Activated naive CD4-positive, alpha-beta T cell treated with anti-CD3 and anti-CD28 coated beads for 36 hours (primary cell): ENCODE measurements at regions of chr12 and their contacts with region 1.

Region 1: DNA sequence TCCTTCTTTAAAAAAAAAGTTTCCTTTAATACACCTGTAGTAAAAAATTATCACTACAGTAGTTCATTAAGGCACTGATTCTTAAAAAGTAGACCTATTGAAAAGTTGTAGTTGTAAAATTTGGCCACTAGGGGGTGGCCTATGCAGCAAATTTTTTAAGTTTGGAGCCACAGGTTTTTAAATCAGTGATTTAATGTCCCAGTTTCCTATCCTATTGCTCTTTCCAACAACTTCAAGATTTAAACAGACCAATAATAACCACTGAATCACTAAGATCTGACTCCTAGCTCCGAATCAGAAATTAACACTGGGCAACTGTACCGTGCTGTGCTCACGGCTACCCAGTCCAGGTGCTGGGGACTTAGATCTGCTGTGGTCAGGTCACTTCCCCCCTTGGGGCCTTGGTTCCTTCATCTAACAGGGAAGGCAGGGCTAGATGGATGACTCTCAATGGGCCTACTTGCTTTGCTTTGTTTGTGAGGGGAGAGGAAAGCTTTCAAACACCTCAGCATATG is 279.3 kb downstream of the MED13L start:
- DNase-seq: peak; percentile 32
- H3K4me3 Mint-ChIP-seq: no peak overlapping the region
- H3K27ac Mint-ChIP-seq: no peak overlapping the region
- H3K4me1 Mint-ChIP-seq: peaks cover 19% of the 10 kb centered on the region
- H3K27me3 Mint-ChIP-seq: no peaks in the 10 kb centered on the region

Region 2: DNA sequence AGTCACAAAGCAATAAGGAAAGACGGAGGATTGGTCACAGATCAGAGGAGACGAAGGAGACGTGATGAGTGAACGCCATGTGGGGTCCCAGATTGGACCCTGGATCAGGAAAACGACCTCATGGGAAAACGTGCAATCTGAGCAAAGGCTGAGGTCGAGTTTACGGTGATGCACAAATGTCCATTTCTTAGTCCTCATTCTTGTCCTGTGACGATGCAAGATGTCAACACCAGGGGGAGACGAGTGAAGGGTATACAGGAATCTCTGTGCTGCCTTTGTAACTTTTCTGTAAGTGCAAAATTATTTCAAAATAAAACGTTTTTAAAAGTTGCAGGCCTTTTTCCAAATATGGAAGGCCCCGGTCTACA is 50.5 kb before region 1 on chr12:
- CTCF ChIA-PET with region 1: no interaction called
- intact Hi-C with region 1: no loop called
- DNase-seq: no peak
- H3K4me3 Mint-ChIP-seq: no peak overlapping the region
- H3K27ac Mint-ChIP-seq: no peak overlapping the region
- H3K4me1 Mint-ChIP-seq: no peaks in the 10 kb centered on the region
- H3K27me3 Mint-ChIP-seq: no peaks in the 10 kb centered on the region

Region 3: GRCh38 chr12:116066381-116067230 is 68.4 kb after region 1 on chr12:
- CTCF ChIA-PET with region 1: interaction called, 3 read pairs
- intact Hi-C with region 1: loop called (anchors 2 kb)
- DNase-seq: peak; percentile 74
- H3K4me3 Mint-ChIP-seq: no peak overlapping the region
- H3K27ac Mint-ChIP-seq: no peak overlapping the region
- H3K4me1 Mint-ChIP-seq: peaks cover 34% of the 10 kb centered on the region
- H3K27me3 Mint-ChIP-seq: no peaks in the 10 kb centered on the region

Region 4: GRCh38 chr12:116194935-116195431 is 196.8 kb after region 1 on chr12:
- CTCF ChIA-PET with region 1: interaction called, 4 read pairs
- intact Hi-C with region 1: loop called (anchors 2 kb)
- DNase-seq: peak; percentile 87
- H3K4me3 Mint-ChIP-seq: no peak overlapping the region
- H3K27ac Mint-ChIP-seq: no peak overlapping the region
- H3K4me1 Mint-ChIP-seq: peaks cover 53% of the 10 kb centered on the region
- H3K27me3 Mint-ChIP-seq: no peaks in the 10 kb centered on the region

Region 5: GRCh38 chr12:116236148-116236731 is 238.1 kb after region 1 on chr12:
- CTCF ChIA-PET with region 1: interaction called, 6 read pairs
- intact Hi-C with region 1: loop called (anchors 1 kb)
- DNase-seq: peak; percentile 77
- H3K4me3 Mint-ChIP-seq: peak overlapping the region; percentile 4
- H3K27ac Mint-ChIP-seq: peak overlapping the region; percentile 71
- H3K4me1 Mint-ChIP-seq: peaks cover 37% of the 10 kb centered on the region
- H3K27me3 Mint-ChIP-seq: no peaks in the 10 kb centered on the region

Region 6: GRCh38 chr12:116247377-116247776 is 249.2 kb after region 1 on chr12:
- CTCF ChIA-PET with region 1: no interaction called
- intact Hi-C with region 1: no loop called
- DNase-seq: no peak
- H3K4me3 Mint-ChIP-seq: no peak overlapping the region
- H3K27ac Mint-ChIP-seq: no peak overlapping the region
- H3K4me1 Mint-ChIP-seq: peaks cover 59% of the 10 kb centered on the region
- H3K27me3 Mint-ChIP-seq: no peaks in the 10 kb centered on the region

Region 7: GRCh38 chr12:116599285-116600136 is 601.3 kb after region 1 on chr12:
- CTCF ChIA-PET with region 1: interaction called, 4 read pairs
- intact Hi-C with region 1: loop called (anchors 1 kb)
- DNase-seq: peak; percentile 73
- H3K4me3 Mint-ChIP-seq: no peak overlapping the region
- H3K27ac Mint-ChIP-seq: no peak overlapping the region
- H3K4me1 Mint-ChIP-seq: peaks cover 13% of the 10 kb centered on the region
- H3K27me3 Mint-ChIP-seq: no peaks in the 10 kb centered on the region

Region 8: GRCh38 chr12:116708826-116709756 is 710.9 kb after region 1 on chr12:
- CTCF ChIA-PET with region 1: no interaction called
- intact Hi-C with region 1: loop called (anchors 5 kb)
- DNase-seq: peak; percentile 71
- H3K4me3 Mint-ChIP-seq: peak overlapping the region; percentile 63
- H3K27ac Mint-ChIP-seq: no peak overlapping the region
- H3K4me1 Mint-ChIP-seq: peaks cover 8% of the 10 kb centered on the region
- H3K27me3 Mint-ChIP-seq: peaks cover 6% of the 10 kb centered on the region

Region 9: DNA sequence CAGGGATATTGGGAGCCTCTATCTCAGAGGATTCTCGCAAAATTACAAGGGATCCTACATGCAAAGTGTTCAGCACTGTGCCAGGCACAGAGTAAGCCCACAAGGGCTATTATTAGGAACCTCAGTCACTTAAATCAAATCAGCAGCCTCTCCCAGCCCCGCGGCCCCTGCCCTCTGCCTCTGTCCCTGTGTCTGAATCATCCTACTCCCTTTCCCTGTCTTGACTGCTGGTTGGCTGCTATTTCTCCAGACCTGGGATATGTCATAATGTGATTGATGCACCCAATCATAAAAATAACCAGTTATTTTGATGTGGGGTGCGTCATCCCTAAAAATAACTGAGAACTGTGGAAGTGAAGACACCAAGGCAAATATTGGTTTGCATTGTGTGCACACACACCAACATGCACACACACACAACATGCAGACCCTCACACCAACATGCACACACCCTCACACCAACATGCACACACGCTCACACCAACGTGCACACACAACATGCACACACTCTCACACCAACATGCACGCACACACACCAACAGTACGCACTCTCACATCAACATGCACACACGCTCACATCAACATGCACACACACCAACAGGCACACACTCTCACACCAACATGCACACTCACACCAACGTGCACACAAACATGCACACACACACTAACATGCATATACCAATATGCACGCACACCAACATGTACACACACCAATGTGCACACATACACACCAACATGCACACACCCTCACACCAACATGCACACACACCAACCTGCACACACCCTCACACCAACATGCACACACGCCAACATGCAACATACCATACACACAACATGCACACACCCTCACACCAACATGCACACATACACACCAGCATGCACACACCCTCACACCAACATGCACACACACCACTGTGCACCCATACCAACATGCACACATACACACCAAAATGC is 1794.6 kb after region 1 on chr12:
- CTCF ChIA-PET with region 1: no interaction called
- intact Hi-C with region 1: no loop called
- DNase-seq: no peak
- H3K4me3 Mint-ChIP-seq: no peak overlapping the region
- H3K27ac Mint-ChIP-seq: no peak overlapping the region
- H3K4me1 Mint-ChIP-seq: no peaks in the 10 kb centered on the region
- H3K27me3 Mint-ChIP-seq: no peaks in the 10 kb centered on the region